Heart right ventricle (tissue), 16 donors: ENCODE measurements at regions of chr12 and their contacts with region 1.

Region 1: GRCh38 chr12:1939801-1940607 is 21.6 kb upstream of the CACNA2D4 start:
- DNase-seq: peak; percentile 88 to 92
- ATAC-seq: peak; percentile 64 to 91 (median 86)
- H3K4me3 ChIP-seq: peak overlapping the region in 1 of 10 donors; percentile 6
- H3K27ac ChIP-seq: peak overlapping the region in 2 of 10 donors; percentile 7 to 37
- H3K4me1 ChIP-seq: peaks cover 4 to 31% (median 11%) of the 10 kb centered on the region in 9 donors
- H3K27me3 ChIP-seq: no peaks in the 10 kb centered on the region
- CTCF ChIP-seq: peak; percentile 90 to 99 (median 98)

Region 2: DNA sequence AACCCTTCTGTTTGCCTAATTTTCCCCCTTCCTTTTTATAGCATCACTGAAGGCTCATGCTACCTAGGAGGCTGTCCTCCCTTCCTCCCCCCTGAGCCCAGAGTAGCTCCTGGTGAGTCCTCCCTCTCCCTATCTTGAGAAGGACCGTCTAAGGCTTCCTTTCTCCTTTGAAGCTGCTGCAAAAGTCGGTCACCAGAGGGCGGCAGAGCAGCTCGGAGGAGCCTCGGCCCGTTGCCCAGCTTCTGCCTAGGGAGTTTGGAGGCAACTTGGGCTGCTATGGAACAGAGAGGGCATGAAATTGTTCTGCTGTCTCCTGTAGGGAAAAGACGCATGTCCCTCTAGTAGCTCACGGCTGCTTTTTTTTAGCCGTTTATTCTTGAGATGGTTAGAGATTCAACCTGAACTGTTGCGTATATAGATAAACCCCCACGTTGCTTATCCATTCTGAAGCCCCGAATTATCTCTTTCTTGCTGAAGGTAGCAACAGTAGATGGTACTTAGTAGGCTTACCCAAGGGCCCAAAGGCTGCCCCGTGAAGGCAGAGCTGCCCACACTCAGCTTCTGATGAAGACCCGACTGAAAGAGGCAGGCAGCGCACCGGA is 305.3 kb before region 1 on chr12:
- intact Hi-C with region 1: loop called in 3 of 10 experiments (anchors 1 to 5 kb)
- DNase-seq: peak; percentile 81 to 86
- ATAC-seq: peak; percentile 27 to 64 (median 48)
- H3K4me3 ChIP-seq: no peak overlapping the region
- H3K27ac ChIP-seq: no peak overlapping the region
- H3K4me1 ChIP-seq: peaks cover 0 to 42% (median 24%) of the 10 kb centered on the region in 9 donors
- H3K27me3 ChIP-seq: peaks cover 0 to 24% (median 0%) of the 10 kb centered on the region in 7 donors
- CTCF ChIP-seq: peak; percentile 68 to 92 (median 86)

Region 3: DNA sequence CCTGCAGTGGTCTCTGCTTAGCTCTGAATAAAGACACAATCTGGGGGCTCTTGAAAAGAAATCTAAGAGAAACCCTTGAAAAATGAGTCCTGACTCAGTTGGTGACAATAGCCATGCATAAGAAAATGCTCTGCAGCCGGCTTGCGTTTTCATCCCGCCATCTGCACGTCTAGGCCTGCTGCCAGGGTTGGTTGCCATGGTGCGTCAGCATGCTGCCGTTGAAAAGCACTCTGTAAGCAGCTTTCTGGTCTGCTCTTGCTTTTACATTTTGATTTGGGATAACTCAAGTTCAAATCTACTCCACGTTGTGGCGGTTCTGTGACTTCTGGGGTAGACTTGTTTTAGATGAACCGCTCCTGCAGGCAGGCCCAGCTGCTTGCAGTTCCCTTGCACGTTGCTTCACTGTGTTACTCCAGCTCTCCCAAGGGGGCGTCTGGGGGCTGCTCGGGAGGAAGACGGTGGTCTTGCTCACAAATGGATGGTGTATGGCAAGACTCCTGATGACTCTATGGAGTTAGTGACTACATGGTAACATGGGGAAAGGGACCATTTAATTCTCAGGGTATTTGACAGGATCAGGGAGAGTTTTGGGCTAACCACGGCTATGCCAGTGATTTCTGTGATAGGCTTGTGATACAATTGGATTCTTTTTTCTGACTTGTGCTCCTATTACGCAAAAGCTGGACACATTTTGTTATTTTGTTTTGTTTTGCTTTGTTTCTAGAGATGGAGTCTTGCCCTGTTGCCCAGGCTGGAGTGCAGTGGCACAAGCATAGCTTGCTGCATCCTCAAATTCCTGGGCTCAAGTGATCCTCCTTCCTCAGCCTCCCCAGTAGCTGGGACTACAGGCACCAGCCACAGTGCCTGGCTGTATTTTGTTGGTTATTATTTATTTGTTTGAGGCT is 295.2 kb before region 1 on chr12:
- intact Hi-C with region 1: loop called in 2 of 10 experiments (anchors 5 to 10 kb)
- DNase-seq: peak; percentile 84
- ATAC-seq: peak; percentile 39 to 86 (median 78)
- H3K4me3 ChIP-seq: no peak overlapping the region
- H3K27ac ChIP-seq: no peak overlapping the region
- H3K4me1 ChIP-seq: peaks cover 3 to 39% (median 21%) of the 10 kb centered on the region in 9 donors
- H3K27me3 ChIP-seq: peaks cover 0 to 4% (median 0%) of the 10 kb centered on the region in 7 donors
- CTCF ChIP-seq: no peak

Region 4: GRCh38 chr12:1650260-1650977 is 289.6 kb before region 1 on chr12:
- intact Hi-C with region 1: loop called in 9 of 10 experiments (anchors 2 to 10 kb)
- DNase-seq: no peak
- ATAC-seq: peak; percentile 49 to 82 (median 72)
- H3K4me3 ChIP-seq: no peak overlapping the region
- H3K27ac ChIP-seq: peak overlapping the region; percentile 2 to 75 (median 61)
- H3K4me1 ChIP-seq: peaks cover 5 to 35% (median 22%) of the 10 kb centered on the region in 9 donors
- H3K27me3 ChIP-seq: no peaks in the 10 kb centered on the region
- CTCF ChIP-seq: no peak

Region 5: GRCh38 chr12:1656893-1657292 is 283.1 kb before region 1 on chr12:
- intact Hi-C with region 1: loop called in 8 of 10 experiments (anchors 2 to 5 kb)
- DNase-seq: peak in 1 of 2 donors; percentile 42
- ATAC-seq: no peak
- H3K4me3 ChIP-seq: no peak overlapping the region
- H3K27ac ChIP-seq: peak overlapping the region in 3 of 10 donors; percentile 62 to 99 (median 79)
- H3K4me1 ChIP-seq: peaks cover 11 to 47% (median 33%) of the 10 kb centered on the region in 9 donors
- H3K27me3 ChIP-seq: no peaks in the 10 kb centered on the region
- CTCF ChIP-seq: no peak

Region 6: DNA sequence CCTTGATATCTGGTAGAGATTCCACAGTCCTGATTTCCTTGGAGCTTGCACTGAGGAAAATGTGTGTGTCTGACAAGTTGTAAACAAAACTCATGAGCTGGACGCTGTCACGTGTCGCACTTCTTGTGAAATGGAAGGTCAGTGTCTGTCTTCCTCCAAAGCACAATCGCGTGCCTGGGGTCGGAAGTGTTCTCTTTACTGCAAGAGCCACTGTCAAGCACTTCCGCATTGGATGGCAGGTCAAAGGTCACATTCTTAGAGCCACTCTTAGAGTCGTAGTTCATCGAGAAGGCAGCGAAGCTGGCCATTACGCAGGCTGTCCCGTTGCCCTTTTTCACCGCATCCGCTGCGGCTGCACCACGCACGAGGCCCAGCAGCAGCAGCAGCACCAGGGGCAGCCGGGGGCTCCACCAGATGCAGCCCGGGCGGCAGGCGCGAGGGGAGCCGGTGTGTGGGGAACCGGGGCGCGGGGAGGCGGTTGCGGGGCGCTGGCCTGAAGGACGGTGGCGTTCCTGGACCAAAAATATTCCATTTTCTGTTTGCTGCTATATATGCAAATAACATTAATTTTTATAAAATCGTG is 74.6 kb before region 1 on chr12:
- intact Hi-C with region 1: no loop called
- DNase-seq: no peak
- ATAC-seq: no peak
- H3K4me3 ChIP-seq: no peak overlapping the region
- H3K27ac ChIP-seq: no peak overlapping the region
- H3K4me1 ChIP-seq: no peaks in the 10 kb centered on the region
- H3K27me3 ChIP-seq: peaks cover 0 to 56% (median 39%) of the 10 kb centered on the region in 7 donors
- CTCF ChIP-seq: no peak